Activated naive CD4-positive, alpha-beta T cell treated with anti-CD3 and anti-CD28 coated beads for 36 hours (primary cell): ENCODE measurements at regions of chr6 and their contacts with region 1.

Region 1: GRCh38 chr6:7697820-7698623 is 27.9 kb upstream of the BMP6 start:
- DNase-seq: peak; percentile 45
- H3K4me3 Mint-ChIP-seq: peak overlapping the region; percentile 6
- H3K27ac Mint-ChIP-seq: peak overlapping the region; percentile 86
- H3K4me1 Mint-ChIP-seq: peaks cover 13% of the 10 kb centered on the region
- H3K27me3 Mint-ChIP-seq: peaks cover 3% of the 10 kb centered on the region

Region 2: GRCh38 chr6:7224731-7225130 is 473.3 kb before region 1 on chr6:
- CTCF ChIA-PET with region 1: no interaction called
- intact Hi-C with region 1: no loop called
- DNase-seq: no peak
- H3K4me3 Mint-ChIP-seq: no peak overlapping the region
- H3K27ac Mint-ChIP-seq: no peak overlapping the region
- H3K4me1 Mint-ChIP-seq: no peaks in the 10 kb centered on the region
- H3K27me3 Mint-ChIP-seq: no peaks in the 10 kb centered on the region

Region 3: DNA sequence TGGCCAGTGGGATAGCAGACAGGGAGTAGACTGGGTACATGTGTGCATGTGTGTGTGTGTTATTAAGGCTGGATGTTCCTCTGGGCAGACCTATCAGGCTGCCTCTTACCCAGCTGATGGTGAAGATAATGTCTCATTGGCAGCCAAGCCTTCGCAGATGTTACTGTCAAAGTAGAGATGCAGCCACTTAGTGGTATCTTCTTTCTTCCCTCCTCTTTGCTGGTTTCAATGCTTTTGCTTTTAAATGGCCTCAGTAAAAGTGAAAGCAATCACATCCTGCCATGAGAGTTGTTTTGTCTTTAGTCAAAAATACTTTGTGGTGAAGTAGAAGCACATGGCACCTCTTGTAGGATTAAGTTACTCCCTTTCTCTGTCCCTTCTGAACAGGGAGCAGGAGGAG is 50.5 kb before region 1 on chr6:
- CTCF ChIA-PET with region 1: interaction called, 3 read pairs
- intact Hi-C with region 1: loop called (anchors 2 kb)
- DNase-seq: peak; percentile 12
- H3K4me3 Mint-ChIP-seq: no peak overlapping the region
- H3K27ac Mint-ChIP-seq: no peak overlapping the region
- H3K4me1 Mint-ChIP-seq: peaks cover 13% of the 10 kb centered on the region
- H3K27me3 Mint-ChIP-seq: no peaks in the 10 kb centered on the region